ENCODE measurements at regions of chr17 and their contacts with region 1.

Region 1: GRCh38 chr17:40287494-40288369 is at the start of gene CDC6:
- DNase-seq: peak; percentile 99
- ATAC-seq: peak; percentile 87
- H3K4me3 Mint-ChIP-seq: peak within 1 kb of the TSS; percentile 100
- H3K27ac Mint-ChIP-seq: peak within 1 kb of the TSS; percentile 100
- H3K4me1 Mint-ChIP-seq: peaks cover 60% of the 10 kb centered on the region
- H3K27me3 Mint-ChIP-seq: no peaks in the 10 kb centered on the region
- total RNA-seq, gene CDC6: 105 to 171 TPM

Region 2: DNA sequence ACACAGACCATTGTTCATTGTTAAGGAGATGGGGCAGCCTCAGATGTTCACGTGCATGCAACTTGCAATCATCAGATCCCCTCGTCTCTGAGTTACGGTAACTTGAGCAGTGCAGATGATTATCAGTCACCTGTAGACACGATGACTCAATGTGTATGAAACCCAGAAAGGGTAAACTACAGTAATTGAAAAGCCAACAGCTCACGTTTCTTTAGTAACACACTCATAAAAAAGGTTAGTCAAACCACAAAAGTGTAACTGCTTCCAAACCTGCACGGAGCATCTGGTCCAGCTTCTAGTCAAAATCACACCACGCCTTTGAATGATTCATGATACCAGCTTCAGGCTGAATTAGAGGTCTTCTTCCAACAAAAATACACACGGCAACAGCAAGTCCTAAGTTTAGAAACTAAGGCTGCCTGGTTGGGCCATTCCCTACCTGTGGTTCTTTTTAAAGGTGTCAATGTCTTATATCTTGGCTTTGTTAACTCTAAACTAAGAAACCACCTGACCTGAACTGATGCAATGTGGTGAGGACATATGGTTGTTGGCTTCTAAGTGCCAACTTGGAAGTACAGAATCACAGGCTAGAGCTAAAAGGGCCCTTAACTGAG is 517.7 kb before region 1 on chr17:
- CTCF ChIA-PET with region 1: no interaction called
- POLR2A ChIA-PET with region 1: interaction called, 5 read pairs
- intact Hi-C with region 1: loop called in 1 of 2 experiments (anchors 2 kb)
- DNase-seq: peak; percentile 78
- ATAC-seq: peak; percentile 80
- H3K4me3 Mint-ChIP-seq: peak overlapping the region; percentile 7
- H3K27ac Mint-ChIP-seq: peak overlapping the region; percentile 82
- H3K4me1 Mint-ChIP-seq: peaks cover 96% of the 10 kb centered on the region
- H3K27me3 Mint-ChIP-seq: no peaks in the 10 kb centered on the region

Region 3: DNA sequence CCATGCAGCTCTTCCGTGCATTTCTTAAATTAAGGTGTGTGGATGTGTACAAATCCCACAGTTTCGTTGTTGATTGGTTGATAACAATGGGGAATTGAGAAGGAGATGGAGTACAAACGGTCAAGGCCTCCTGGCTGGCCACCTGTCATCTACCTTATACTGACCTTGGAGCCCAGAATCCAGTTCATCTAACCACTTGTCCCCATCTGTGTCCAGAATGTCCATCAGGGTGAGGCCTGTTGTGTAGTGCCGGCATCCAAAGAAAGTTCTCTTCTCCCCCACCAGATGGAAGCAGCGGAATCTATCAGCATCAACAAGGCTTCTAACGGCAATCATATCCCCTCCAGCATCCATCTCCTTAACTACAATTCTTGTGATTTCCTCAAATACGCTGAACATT is 370.8 kb before region 1 on chr17:
- CTCF ChIA-PET with region 1: no interaction called
- POLR2A ChIA-PET with region 1: no interaction called
- intact Hi-C with region 1: no loop called
- DNase-seq: no peak
- ATAC-seq: no peak
- H3K4me3 Mint-ChIP-seq: no peak overlapping the region
- H3K27ac Mint-ChIP-seq: peak overlapping the region; percentile 49
- H3K4me1 Mint-ChIP-seq: peaks cover 37% of the 10 kb centered on the region
- H3K27me3 Mint-ChIP-seq: no peaks in the 10 kb centered on the region

Region 4: DNA sequence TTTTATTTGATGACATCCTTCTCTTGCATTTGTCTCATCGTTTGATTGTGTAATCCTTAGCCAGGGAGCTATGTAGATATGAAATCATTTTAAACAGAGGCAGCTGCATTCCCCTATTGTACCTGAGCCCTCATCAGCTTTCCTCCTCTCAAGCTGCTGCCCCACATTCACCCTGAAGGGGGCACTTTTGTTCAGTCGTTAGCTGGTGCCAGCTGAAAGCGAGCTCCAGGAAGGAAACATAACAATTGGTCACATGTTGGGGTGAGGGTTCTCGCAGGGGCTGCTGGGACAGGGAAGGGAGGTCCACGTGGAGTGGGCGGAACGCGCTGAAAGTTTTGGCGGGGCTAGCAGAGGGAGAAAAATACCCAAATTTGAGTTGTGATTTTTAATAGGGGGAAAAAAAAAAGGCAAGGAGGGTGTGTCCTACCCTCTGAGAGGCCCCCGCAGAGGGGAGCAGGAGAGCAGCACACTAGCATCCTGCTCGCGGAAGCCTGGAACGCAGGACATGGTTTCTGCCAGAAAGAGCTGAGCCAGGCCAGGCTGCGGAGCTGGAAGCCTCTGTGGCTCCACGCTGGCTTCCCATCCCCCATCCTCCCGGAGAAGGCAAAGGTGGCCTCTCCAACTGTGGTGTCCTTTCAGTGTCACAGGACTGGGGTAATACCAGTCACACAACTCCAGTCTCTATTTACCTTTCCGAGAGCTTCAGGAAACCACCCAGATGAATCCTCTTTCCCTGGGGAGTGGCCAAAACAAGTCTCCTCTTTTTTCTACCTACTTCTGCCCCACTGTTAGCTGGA is 174.4 kb before region 1 on chr17:
- CTCF ChIA-PET with region 1: interaction called, 3 read pairs
- POLR2A ChIA-PET with region 1: interaction called, 5 read pairs
- intact Hi-C with region 1: loop called (anchors 2 to 5 kb)
- DNase-seq: peak; percentile 96
- ATAC-seq: peak; percentile 82
- H3K4me3 Mint-ChIP-seq: peak overlapping the region; percentile 72
- H3K27ac Mint-ChIP-seq: peak overlapping the region; percentile 86
- H3K4me1 Mint-ChIP-seq: peaks cover 55% of the 10 kb centered on the region
- H3K27me3 Mint-ChIP-seq: no peaks in the 10 kb centered on the region

Region 5: GRCh38 chr17:40157973-40158372 is 129.8 kb before region 1 on chr17:
- CTCF ChIA-PET with region 1: interaction called, 3 read pairs
- POLR2A ChIA-PET with region 1: no interaction called
- intact Hi-C with region 1: loop called in 1 of 2 experiments (anchors 1 kb)
- DNase-seq: no peak
- ATAC-seq: no peak
- H3K4me3 Mint-ChIP-seq: no peak overlapping the region
- H3K27ac Mint-ChIP-seq: peak overlapping the region; percentile 24
- H3K4me1 Mint-ChIP-seq: peaks cover 35% of the 10 kb centered on the region
- H3K27me3 Mint-ChIP-seq: no peaks in the 10 kb centered on the region

Region 6: DNA sequence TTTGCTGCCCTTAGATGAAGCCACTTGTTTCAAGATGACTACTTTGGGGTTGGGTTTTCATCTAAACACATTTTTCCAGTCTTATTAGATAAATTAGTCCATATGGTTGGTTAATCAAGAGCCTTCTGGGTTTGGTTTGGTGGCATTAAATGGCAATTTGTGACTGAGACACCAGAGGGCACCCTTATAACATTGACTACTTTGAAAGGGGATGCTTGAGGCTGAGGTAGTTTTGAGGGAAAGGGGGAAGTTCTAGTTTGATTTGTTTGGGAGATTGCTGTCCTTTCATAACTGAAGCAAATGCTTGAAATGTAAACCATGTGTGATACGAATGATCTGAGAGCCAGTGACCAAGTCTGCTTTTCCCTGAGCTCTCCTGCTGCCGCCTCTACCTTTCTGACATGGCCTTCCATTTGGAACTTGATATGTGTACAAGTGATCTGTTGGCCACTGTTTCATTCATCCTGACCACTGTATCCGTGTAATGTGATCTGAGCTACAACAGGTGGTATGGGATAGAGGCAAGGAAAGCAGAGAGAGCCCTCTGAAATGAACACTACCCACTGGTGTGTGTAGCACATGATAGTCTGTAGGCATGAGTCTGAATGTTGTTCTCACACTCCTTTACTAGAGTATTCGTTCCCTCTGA is 15.4 kb after region 1 on chr17:
- CTCF ChIA-PET with region 1: interaction called, 34 read pairs
- POLR2A ChIA-PET with region 1: interaction called, 10 read pairs
- intact Hi-C with region 1: no loop called
- DNase-seq: peak; percentile 53
- ATAC-seq: no peak
- H3K4me3 Mint-ChIP-seq: no peak overlapping the region
- H3K27ac Mint-ChIP-seq: peak overlapping the region; percentile 59
- H3K4me1 Mint-ChIP-seq: peaks cover 16% of the 10 kb centered on the region
- H3K27me3 Mint-ChIP-seq: no peaks in the 10 kb centered on the region

Region 7: GRCh38 chr17:40417609-40418427 is 130.1 kb after region 1 on chr17 and contains the start of gene TOP2A:
- CTCF ChIA-PET with region 1: interaction called, 4 read pairs
- POLR2A ChIA-PET with region 1: no interaction called
- intact Hi-C with region 1: loop called in 1 of 2 experiments (anchors 2 kb)
- DNase-seq: peak; percentile 95
- ATAC-seq: peak; percentile 99
- H3K4me3 Mint-ChIP-seq: peak within 1 kb of the TSS; percentile 86
- H3K27ac Mint-ChIP-seq: peak within 1 kb of the TSS; percentile 89
- H3K4me1 Mint-ChIP-seq: peaks cover 24% of the 10 kb centered on the region
- H3K27me3 Mint-ChIP-seq: no peaks in the 10 kb centered on the region
- total RNA-seq, gene TOP2A: 245 to 322 TPM

Region 8: GRCh38 chr17:40750391-40750790 is 462.7 kb after region 1 on chr17:
- CTCF ChIA-PET with region 1: no interaction called
- POLR2A ChIA-PET with region 1: no interaction called
- intact Hi-C with region 1: no loop called
- DNase-seq: no peak
- ATAC-seq: no peak
- H3K4me3 Mint-ChIP-seq: no peak overlapping the region
- H3K27ac Mint-ChIP-seq: no peak overlapping the region
- H3K4me1 Mint-ChIP-seq: no peaks in the 10 kb centered on the region
- H3K27me3 Mint-ChIP-seq: peaks cover 32% of the 10 kb centered on the region

Measured in activated CD4-positive, alpha-beta T cell treated with anti-CD3 and anti-CD28 coated beads for 36 hours (primary cell).